Mammary epithelial cell (primary cell): ENCODE measurements at regions of chrX and their contacts with region 1.

Region 1: DNA sequence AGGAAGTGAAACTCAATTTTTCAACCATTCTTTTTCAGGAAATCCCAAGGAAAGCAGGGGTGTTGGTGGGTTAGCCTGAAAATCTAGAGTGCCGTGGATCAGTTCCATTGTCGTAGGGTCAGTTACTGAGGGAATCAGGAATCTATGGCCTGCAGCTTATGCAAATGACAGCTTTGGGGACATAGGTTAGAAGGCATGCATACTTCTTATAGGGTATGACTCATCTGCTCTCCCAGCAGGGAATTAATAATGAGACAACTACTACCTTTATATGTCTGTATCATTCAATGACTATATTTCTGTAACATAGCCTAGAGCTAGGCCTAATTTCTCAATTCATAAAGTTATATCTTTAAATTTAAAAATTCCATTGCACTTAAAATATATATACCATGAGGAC is 36.6 kb downstream of the ZNF41 start:
- DNase-seq: no peak
- H3K4me3 ChIP-seq: no peak overlapping the region
- H3K27ac ChIP-seq: no peak overlapping the region
- H3K4me1 ChIP-seq: no peaks in the 10 kb centered on the region
- H3K27me3 ChIP-seq: no peaks in the 10 kb centered on the region
- CTCF ChIP-seq: no peak

Region 2: GRCh38 chrX:47193475-47194193 is 252.8 kb before region 1 on chrX and contains the start of gene UBA1:
- CTCF ChIA-PET with region 1: no interaction called
- dilution Hi-C with region 1: no loop called
- in situ Hi-C with region 1: no loop called
- intact Hi-C with region 1: no loop called
- DNase-seq: peak; percentile 96
- H3K4me3 ChIP-seq: peak within 1 kb of the TSS; percentile 74 to 92 (median 76)
- H3K27ac ChIP-seq: peak within 1 kb of the TSS; percentile 81
- H3K4me1 ChIP-seq: peaks cover 44% of the 10 kb centered on the region
- H3K27me3 ChIP-seq: no peaks in the 10 kb centered on the region
- CTCF ChIP-seq: peak; percentile 79 to 87
- total RNA-seq, gene UBA1: 231 to 360 TPM

Region 3: DNA sequence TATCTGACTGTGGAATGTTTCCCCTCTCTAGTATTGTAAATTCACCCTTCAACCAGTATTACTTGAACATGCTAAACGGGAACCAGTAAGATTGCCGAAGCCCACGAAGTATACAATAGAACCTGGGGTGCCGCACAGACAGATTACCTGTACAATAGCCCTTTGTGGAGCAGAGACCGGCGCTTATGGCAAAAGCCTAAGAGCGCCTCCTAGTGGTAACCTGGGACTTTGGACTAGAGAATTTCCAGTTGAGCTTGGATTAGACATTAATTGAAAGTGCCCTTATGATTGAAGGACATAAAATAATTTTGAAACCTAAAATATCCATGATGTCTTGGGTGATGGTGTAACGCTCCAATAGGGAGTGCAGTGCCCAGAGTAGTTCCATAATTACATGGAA is 61.9 kb before region 1 on chrX:
- CTCF ChIA-PET with region 1: no interaction called
- dilution Hi-C with region 1: loop called (anchors 5 kb)
- in situ Hi-C with region 1: no loop called
- intact Hi-C with region 1: no loop called
- DNase-seq: peak; percentile 56
- H3K4me3 ChIP-seq: no peak overlapping the region
- H3K27ac ChIP-seq: no peak overlapping the region
- H3K4me1 ChIP-seq: no peaks in the 10 kb centered on the region
- H3K27me3 ChIP-seq: no peaks in the 10 kb centered on the region
- CTCF ChIP-seq: peak; percentile 63 to 74

Region 4: DNA sequence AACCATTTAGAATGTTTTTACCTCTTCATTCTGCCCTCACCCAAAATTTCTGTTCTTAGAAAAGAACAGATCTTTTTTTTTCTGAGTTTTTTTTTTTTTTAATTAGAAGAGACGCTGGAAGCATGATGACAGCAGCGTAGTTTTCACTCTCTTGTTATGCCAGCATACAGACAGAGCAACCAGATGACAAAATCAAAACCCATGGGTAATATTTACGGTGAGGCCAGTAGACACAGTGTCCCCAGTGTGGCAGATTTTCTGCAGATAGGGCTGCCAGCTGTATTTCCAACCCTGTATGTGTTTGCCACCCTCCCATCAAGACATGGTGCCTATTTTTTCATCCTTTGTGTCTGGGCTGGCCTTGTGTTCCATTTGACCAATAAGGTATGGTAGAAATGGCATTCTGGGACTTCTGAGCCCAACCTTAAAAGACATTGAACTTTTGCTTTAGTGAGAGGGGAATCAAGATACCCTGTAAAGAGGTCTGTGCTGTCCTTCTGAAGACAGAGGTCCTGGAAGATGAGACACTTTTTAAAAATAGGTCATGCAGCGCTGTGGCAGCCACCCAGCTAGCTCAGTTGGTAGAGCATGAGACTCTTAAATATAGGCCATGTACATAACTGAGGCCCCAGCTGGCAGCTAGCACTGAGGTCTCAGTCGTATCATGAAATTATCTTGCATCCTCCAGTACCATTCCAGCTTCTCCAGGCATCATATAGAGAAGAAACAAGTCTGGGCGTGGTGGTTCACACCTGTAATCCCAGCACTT is 43.3 kb after region 1 on chrX:
- CTCF ChIA-PET with region 1: no interaction called
- dilution Hi-C with region 1: loop called (anchors 5 kb)
- in situ Hi-C with region 1: no loop called
- intact Hi-C with region 1: no loop called
- DNase-seq: no peak
- H3K4me3 ChIP-seq: no peak overlapping the region
- H3K27ac ChIP-seq: no peak overlapping the region
- H3K4me1 ChIP-seq: no peaks in the 10 kb centered on the region
- H3K27me3 ChIP-seq: no peaks in the 10 kb centered on the region
- CTCF ChIP-seq: no peak